MCF 10A (cell line): ENCODE measurements at regions of chr1 and their contacts with region 1.

Region 1: DNA sequence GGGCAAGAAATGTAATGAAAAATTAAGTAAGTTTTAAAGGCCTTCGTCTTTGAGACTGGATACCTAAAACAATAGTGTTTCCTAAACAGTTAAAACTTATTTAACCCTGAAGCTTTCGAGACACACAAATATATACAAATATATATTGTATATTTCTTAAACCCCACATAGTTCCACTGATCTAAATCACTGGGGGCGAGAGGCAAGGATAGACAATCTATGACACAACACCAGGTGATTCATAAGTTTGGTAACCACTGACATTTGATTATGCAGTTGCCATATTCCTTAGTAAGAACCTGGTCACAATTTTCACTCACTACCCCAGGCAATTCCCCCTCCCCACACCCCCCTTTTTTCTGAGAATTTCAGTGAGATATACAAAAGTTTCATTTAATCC is 55.3 kb upstream of the BOLA1 start:
- DNase-seq: peak; percentile 80
- H3K4me3 Mint-ChIP-seq: peak overlapping the region; percentile 93
- H3K27ac Mint-ChIP-seq: peak overlapping the region; percentile 65
- H3K4me1 Mint-ChIP-seq: peaks cover 52% of the 10 kb centered on the region
- H3K27me3 Mint-ChIP-seq: no peaks in the 10 kb centered on the region
- CTCF ChIP-seq: no peak

Region 2: DNA sequence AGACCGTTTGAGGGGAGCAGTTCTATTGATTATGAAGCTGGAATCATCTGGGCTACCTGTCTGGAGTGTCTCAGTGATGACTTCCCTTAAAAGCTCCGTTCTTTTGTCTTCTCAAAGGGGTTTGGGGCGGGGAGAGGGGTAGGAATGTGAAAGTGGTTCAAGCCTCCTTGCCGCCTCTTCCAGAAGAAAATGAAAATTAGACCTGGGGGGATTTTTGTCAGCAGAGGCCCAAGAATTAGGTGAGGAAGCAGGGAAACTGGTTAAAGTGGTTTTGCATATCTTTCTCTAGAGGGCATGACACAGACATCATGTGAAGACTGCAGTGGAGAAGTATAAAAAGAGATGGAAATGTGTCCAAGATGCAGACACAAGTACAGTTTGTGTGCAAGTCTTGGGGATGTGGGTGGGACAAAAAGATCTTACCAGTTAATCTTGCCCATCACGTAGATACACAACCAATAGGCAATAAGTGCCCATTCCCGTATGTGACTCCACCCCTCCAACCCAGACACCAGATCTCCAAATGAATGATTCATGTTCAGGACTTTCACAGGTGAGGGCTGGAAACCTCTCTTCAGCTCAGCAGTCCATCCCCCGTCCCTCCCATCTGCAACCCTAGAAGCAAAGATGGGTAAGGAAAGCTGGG is 93.1 kb after region 1 on chr1:
- CTCF ChIA-PET with region 1: no interaction called
- POLR2A ChIA-PET with region 1: interaction called, 18 read pairs
- intact Hi-C with region 1: no loop called
- DNase-seq: peak; percentile 96
- H3K4me3 Mint-ChIP-seq: peak overlapping the region; percentile 91
- H3K27ac Mint-ChIP-seq: peak overlapping the region; percentile 93
- H3K4me1 Mint-ChIP-seq: peaks cover 48% of the 10 kb centered on the region
- H3K27me3 Mint-ChIP-seq: no peaks in the 10 kb centered on the region
- CTCF ChIP-seq: peak; percentile 23

Region 3: GRCh38 chr1:150281837-150282653 is 437.9 kb after region 1 on chr1 and contains the start of gene CIART:
- CTCF ChIA-PET with region 1: no interaction called
- POLR2A ChIA-PET with region 1: no interaction called
- intact Hi-C with region 1: no loop called
- DNase-seq: peak; percentile 99
- H3K4me3 Mint-ChIP-seq: peak within 1 kb of the TSS; percentile 83
- H3K27ac Mint-ChIP-seq: peak within 1 kb of the TSS; percentile 94
- H3K4me1 Mint-ChIP-seq: peaks cover 43% of the 10 kb centered on the region
- H3K27me3 Mint-ChIP-seq: no peaks in the 10 kb centered on the region
- CTCF ChIP-seq: no peak
- total RNA-seq, gene CIART: 5.0 and 5.2 TPM in 2 replicates